ENCODE measurements at regions of chrX and their contacts with region 1.

Region 1: DNA sequence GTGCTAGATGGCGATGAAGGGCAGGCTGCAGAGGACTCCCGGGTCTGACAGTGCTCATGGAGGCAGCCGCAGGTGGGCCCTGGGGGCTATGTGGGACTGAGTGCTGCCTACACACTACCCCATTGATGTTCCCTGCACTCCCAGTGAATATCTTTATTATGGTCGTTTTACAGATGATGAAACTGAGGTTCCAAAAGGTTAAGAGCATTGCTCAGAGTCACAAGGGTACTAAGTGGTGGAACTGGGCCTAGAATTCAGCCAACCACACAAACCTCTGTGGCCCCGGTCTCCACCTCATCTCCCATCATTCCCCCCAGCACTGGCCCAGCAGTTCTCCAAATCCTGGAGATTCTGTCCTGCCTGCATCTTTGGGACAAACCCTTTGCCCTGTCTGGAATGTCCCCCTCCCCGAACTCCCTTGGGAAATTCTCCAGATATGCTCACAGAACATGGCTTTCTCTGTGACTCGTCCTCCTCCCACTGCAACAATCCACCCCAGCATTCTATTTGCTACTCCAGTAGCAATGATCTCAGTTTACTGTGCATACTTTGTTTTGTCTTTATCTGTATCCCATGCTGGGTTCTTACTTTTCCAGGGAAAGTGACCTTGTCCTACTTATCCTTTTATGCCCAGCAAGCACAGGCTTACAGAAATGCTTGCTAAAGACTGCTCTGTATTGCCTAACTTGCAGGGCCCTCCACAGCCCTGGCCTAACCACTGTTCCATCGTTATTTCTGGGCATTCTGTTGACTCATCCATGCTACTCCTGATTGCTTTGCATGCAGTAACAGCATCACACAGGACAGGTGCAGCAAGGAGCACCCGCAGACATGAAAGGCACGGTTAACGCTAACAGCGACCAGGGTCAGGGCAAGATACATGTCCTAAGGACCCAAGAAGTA is 14.0 kb downstream of the PNMA6F start:
- DNase-seq: no peak
- ATAC-seq: no peak
- H3K4me3 ChIP-seq: no peak overlapping the region
- H3K27ac ChIP-seq: no peak overlapping the region
- H3K4me1 ChIP-seq: no peaks in the 10 kb centered on the region
- H3K27me3 ChIP-seq: peaks cover 52% of the 10 kb centered on the region
- CTCF ChIP-seq: no peak

Region 2: DNA sequence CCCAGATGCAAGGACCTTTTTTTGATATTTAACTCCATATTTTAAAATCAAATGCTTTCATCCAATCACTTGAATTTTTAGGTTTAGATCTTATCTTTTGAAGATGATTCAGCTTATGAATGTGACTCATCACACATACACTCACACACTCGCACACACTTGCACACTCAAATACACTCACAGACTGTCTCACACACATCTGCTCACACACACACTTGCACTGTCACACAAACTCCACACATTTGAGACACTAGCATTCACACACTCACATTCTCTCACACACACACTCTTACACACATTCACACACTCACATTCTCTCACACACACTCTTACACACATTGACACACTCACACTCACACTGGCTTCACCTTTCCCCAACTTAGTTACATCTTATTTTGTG is 90.6 kb before region 1 on chrX:
- CTCF ChIA-PET with region 1: no interaction called
- POLR2A ChIA-PET with region 1: no interaction called
- intact Hi-C with region 1: no loop called
- DNase-seq: no peak
- ATAC-seq: no peak
- H3K4me3 ChIP-seq: no peak overlapping the region
- H3K27ac ChIP-seq: no peak overlapping the region
- H3K4me1 ChIP-seq: no peaks in the 10 kb centered on the region
- H3K27me3 ChIP-seq: peaks cover 56% of the 10 kb centered on the region
- CTCF ChIP-seq: no peak

Region 3: DNA sequence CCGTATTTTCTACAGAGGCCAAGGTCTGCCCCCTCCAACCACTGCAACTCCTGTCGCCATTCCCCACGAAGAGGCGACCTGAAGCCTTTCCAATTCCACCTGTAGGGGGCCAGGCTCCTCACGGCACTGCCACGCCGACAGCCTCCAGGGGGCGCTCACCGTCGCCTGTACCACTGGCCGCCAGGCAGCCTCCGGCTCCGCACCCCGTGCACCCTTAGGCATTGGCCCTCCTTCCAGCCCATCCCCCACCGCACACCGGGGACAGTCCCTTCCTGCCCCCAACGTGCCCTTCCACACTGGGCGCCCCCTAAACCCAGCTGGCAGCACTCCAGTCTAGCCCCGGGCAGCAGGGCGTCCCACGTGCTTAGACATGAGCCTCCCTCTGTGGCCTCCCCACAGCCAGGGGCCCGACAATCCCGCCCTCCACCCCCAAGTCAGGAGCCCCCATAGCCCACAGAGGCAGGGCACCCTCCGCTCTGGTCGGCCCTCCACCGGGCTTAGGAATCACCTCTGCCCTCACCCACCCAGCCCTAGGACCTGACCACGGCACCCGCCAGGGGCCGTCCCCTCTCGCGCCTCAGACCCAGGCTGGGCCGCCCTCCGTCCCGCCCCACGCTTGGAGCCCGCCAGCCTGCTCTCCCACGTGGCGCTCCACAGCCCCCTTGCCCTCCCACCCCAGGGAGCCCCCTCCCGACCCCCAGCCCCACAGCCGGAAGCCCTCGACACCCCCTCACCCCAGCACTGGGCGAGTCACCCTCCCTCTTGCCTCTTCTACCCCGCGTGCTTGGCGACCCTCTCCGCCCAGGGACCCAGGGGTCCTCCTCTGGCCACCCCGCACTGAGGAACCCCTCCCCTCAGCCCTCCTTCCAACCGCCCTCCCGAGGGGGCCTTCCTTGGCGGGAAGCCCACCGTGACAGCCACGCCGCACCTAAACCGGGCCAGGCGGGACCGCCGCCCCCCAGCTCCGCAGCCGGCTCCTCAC is 92.9 kb after region 1 on chrX:
- CTCF ChIA-PET with region 1: interaction called, 17 read pairs
- POLR2A ChIA-PET with region 1: no interaction called
- intact Hi-C with region 1: no loop called
- DNase-seq: peak; percentile 49
- ATAC-seq: peak; percentile 50
- H3K4me3 ChIP-seq: no peak overlapping the region
- H3K27ac ChIP-seq: no peak overlapping the region
- H3K4me1 ChIP-seq: no peaks in the 10 kb centered on the region
- H3K27me3 ChIP-seq: peaks cover 21% of the 10 kb centered on the region
- CTCF ChIP-seq: peak; percentile 95